ENCODE measurements at regions of chr14 and their contacts with region 1.

Region 1: DNA sequence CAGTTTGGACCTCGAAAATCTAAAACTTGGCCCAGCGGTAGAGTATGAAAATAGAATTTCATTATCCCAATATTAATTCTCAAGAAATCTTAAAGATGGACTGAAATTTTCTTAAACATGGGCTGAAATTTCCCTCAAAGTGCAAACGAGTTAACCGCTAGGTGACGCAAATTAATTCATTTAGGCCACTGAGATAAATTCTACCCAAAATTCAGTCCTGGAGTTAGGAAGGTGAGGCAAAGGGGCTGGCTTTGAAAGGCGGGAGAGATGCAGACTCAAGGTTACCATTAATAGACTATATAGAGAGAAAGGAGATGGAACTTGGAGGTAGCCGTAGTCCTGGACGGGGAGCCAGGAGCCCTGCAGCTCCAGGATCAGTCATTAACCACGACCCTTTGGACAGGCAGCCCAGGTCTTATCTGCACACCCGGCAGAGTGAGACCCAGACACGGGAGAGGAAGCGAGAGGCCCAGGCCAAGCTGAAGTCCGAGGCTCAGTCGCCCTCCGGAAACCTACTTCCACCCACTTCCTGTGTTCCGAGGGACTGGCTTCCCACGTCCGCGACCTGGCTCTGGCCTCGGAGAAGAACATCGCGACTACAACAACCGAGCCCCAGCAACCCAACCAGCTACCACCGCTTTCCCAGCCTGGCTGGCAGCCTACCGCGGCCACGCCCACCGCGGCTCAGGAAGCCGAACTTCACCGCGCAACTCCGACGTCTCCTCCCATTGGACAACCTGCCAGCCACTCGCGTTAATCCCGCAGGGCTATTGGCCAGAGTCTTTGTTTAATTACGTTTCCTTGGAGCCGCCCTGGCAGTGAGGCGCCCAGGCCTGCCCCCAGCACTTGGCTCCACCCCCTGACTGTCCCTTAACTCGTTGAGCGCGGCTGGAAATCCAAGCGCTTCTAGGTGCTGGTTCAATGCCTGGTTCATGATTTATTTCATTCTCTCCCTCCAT is at the start of gene EFCAB11:
- DNase-seq: peak; percentile 97
- ATAC-seq: peak; percentile 81
- H3K4me3 ChIP-seq: peak within 1 kb of the TSS; percentile 72 to 95 (median 84)
- H3K4me3 Mint-ChIP-seq: peak within 1 kb of the TSS; percentile 99
- H3K27ac ChIP-seq: peak within 1 kb of the TSS; percentile 99
- H3K27ac Mint-ChIP-seq: peak within 1 kb of the TSS; percentile 100
- H3K4me1 ChIP-seq: peaks cover 16 to 22% of the 10 kb centered on the region in 2 donors
- H3K4me1 Mint-ChIP-seq: peaks cover 32% of the 10 kb centered on the region
- H3K27me3 ChIP-seq: no peaks in the 10 kb centered on the region
- H3K27me3 Mint-ChIP-seq: no peaks in the 10 kb centered on the region
- CTCF ChIP-seq: peak; percentile 16
- total RNA-seq, gene EFCAB11: 13.8 and 14.2 TPM in 2 replicates

Region 2: GRCh38 chr14:87992718-87993628 is 1961.4 kb before region 1 on chr14 and contains the start of gene GALC:
- CTCF ChIA-PET with region 1: no interaction called
- POLR2A ChIA-PET with region 1: no interaction called
- intact Hi-C with region 1: loop called (anchors 5 kb)
- DNase-seq: peak; percentile 97
- ATAC-seq: peak; percentile 82
- H3K4me3 ChIP-seq: peak within 1 kb of the TSS; percentile 47 to 74 (median 66)
- H3K4me3 Mint-ChIP-seq: peak within 1 kb of the TSS; percentile 87
- H3K27ac ChIP-seq: peak within 1 kb of the TSS; percentile 95 to 97
- H3K27ac Mint-ChIP-seq: peak within 1 kb of the TSS; percentile 99
- H3K4me1 ChIP-seq: peaks cover 15 to 29% of the 10 kb centered on the region in 2 donors
- H3K4me1 Mint-ChIP-seq: peaks cover 38% of the 10 kb centered on the region
- H3K27me3 ChIP-seq: no peaks in the 10 kb centered on the region
- H3K27me3 Mint-ChIP-seq: no peaks in the 10 kb centered on the region
- CTCF ChIP-seq: no peak
- total RNA-seq, gene GALC: 15.6 and 17.8 TPM in 2 replicates

Region 3: GRCh38 chr14:88562831-88563686 is 1391.3 kb before region 1 on chr14 and contains the start of gene ZC3H14:
- CTCF ChIA-PET with region 1: no interaction called
- POLR2A ChIA-PET with region 1: no interaction called
- intact Hi-C with region 1: loop called (anchors 2 kb)
- DNase-seq: peak; percentile 93
- ATAC-seq: peak; percentile 95
- H3K4me3 ChIP-seq: peak within 1 kb of the TSS; percentile 63 to 93 (median 86)
- H3K4me3 Mint-ChIP-seq: peak within 1 kb of the TSS; percentile 94
- H3K27ac ChIP-seq: peak within 1 kb of the TSS; percentile 48 to 75
- H3K27ac Mint-ChIP-seq: peak within 1 kb of the TSS; percentile 90
- H3K4me1 ChIP-seq: peaks cover 12 to 14% of the 10 kb centered on the region in 2 donors
- H3K4me1 Mint-ChIP-seq: peaks cover 20% of the 10 kb centered on the region
- H3K27me3 ChIP-seq: peaks cover 0 to 13% (median 3%) of the 10 kb centered on the region in 4 experiments
- H3K27me3 Mint-ChIP-seq: peaks cover 13% of the 10 kb centered on the region
- CTCF ChIP-seq: no peak
- total RNA-seq, gene ZC3H14: 47.0 and 48.0 TPM in 2 replicates

Region 4: DNA sequence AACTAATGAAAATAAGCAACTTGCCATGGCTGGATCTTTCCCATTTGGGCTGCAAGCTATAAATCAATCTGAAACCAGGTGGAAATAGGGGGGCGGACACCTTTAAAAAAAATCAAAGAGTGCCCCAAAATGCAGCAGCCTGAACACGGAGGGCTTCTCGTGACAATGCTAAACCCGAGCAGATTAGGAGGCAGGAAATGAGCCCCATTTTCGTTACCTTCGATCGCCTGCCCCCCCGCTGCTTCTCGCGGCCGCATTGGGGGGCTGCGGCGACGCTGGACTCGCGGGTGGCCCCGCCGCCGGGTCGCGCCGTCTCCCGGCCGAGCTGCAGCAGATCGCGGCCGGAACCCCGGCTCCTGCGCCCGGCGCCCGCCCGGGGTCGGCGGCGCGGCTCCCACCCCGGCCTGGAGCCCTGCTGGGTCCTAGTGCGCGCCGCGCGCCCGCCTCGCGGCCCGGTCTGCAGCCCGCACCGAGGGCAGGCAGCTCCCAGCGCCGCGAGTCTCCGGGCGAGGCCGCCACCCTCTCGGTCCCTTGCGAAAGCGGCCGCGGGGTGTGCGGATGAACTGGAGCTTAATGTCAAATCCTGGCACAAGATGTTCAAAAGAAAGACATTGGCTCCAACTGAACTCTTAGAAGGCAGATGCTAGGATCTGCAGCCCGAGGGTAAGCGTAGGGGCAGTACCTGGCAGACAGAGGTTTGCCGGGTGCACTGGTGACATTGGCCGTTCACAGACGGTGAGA is 335.4 kb before region 1 on chr14:
- CTCF ChIA-PET with region 1: no interaction called
- POLR2A ChIA-PET with region 1: no interaction called
- intact Hi-C with region 1: loop called (anchors 1 kb)
- DNase-seq: peak; percentile 81
- ATAC-seq: peak; percentile 72
- H3K4me3 ChIP-seq: peak overlapping the region; percentile 61 to 93 (median 86)
- H3K4me3 Mint-ChIP-seq: peak overlapping the region; percentile 92
- H3K27ac ChIP-seq: peak overlapping the region in 1 of 2 donors; percentile 71
- H3K27ac Mint-ChIP-seq: peak overlapping the region; percentile 86
- H3K4me1 ChIP-seq: peaks cover 51 to 55% of the 10 kb centered on the region in 2 donors
- H3K4me1 Mint-ChIP-seq: peaks cover 66% of the 10 kb centered on the region
- H3K27me3 ChIP-seq: no peaks in the 10 kb centered on the region
- H3K27me3 Mint-ChIP-seq: no peaks in the 10 kb centered on the region
- CTCF ChIP-seq: no peak

Region 5: GRCh38 chr14:90256354-90257131 is 302.2 kb after region 1 on chr14 and contains the start of gene PSMC1:
- CTCF ChIA-PET with region 1: no interaction called
- POLR2A ChIA-PET with region 1: no interaction called
- intact Hi-C with region 1: loop called (anchors 1 kb)
- DNase-seq: peak; percentile 89
- ATAC-seq: peak; percentile 94
- H3K4me3 ChIP-seq: peak within 1 kb of the TSS; percentile 75 to 92 (median 81)
- H3K4me3 Mint-ChIP-seq: peak within 1 kb of the TSS; percentile 99
- H3K27ac ChIP-seq: peak within 1 kb of the TSS; percentile 34 to 82
- H3K27ac Mint-ChIP-seq: peak within 1 kb of the TSS; percentile 97
- H3K4me1 ChIP-seq: peaks cover 14 to 25% of the 10 kb centered on the region in 2 donors
- H3K4me1 Mint-ChIP-seq: peaks cover 38% of the 10 kb centered on the region
- H3K27me3 ChIP-seq: peaks cover 0 to 5% (median 2%) of the 10 kb centered on the region in 4 experiments
- H3K27me3 Mint-ChIP-seq: peaks cover 3% of the 10 kb centered on the region
- CTCF ChIP-seq: no peak
- total RNA-seq, gene PSMC1: 50.2 and 51.6 TPM in 2 replicates

Region 6: DNA sequence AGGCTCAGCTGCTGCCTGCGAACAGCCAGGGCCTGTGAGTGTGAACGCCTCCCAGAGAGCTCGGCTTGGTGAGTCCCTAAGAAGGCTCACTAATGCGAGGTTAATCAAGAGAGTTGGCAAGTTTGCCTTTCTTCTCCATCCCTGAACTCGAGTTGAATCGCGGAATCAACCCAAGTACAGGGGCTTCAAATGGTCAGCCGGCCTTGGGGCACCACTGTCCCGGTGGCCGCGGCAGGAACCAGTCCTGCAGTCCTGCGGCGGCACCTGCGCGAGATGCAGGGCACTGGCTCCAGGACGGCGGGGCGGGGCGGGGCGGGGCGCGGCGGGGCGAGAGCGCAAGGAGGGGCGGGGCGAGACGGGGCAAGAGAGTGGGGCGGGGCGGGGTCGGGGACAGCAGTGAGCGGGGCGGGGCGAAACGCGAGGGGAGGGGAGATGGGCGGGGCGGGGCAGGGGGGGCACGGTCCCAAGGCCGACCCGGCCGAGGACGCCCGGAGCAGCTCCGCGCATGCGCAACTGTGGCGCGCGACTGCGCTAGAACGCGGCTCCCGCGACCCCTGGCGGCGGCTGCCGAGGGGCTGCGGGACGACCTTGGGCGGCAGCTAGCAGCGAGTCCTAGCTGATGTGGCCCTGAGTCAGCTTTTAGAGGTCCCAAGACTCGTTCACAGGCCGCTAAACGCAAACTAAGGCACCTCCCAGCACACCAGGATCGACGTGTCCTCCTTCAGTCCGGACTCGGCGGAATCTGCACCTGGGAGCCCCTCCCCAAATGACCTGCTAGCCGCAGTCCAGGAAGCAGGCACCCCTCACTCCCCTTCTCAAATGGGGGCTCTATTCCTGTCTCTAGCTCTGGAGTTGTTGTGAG is 803.9 kb after region 1 on chr14:
- CTCF ChIA-PET with region 1: interaction called, 3 read pairs
- POLR2A ChIA-PET with region 1: interaction called, 3 read pairs
- intact Hi-C with region 1: loop called (anchors 1 kb)
- DNase-seq: peak; percentile 96
- ATAC-seq: peak; percentile 85
- H3K4me3 ChIP-seq: peak overlapping the region; percentile 59 to 77 (median 66)
- H3K4me3 Mint-ChIP-seq: peak overlapping the region; percentile 82
- H3K27ac ChIP-seq: peak overlapping the region; percentile 71 to 79
- H3K27ac Mint-ChIP-seq: peak overlapping the region; percentile 66
- H3K4me1 ChIP-seq: peaks cover 22 to 29% of the 10 kb centered on the region in 2 donors
- H3K4me1 Mint-ChIP-seq: peaks cover 20% of the 10 kb centered on the region
- H3K27me3 ChIP-seq: no peaks in the 10 kb centered on the region
- H3K27me3 Mint-ChIP-seq: peaks cover 3% of the 10 kb centered on the region
- CTCF ChIP-seq: peak; percentile 78